ENCODE measurements at regions of chr5 and their contacts with region 1.

Region 1: DNA sequence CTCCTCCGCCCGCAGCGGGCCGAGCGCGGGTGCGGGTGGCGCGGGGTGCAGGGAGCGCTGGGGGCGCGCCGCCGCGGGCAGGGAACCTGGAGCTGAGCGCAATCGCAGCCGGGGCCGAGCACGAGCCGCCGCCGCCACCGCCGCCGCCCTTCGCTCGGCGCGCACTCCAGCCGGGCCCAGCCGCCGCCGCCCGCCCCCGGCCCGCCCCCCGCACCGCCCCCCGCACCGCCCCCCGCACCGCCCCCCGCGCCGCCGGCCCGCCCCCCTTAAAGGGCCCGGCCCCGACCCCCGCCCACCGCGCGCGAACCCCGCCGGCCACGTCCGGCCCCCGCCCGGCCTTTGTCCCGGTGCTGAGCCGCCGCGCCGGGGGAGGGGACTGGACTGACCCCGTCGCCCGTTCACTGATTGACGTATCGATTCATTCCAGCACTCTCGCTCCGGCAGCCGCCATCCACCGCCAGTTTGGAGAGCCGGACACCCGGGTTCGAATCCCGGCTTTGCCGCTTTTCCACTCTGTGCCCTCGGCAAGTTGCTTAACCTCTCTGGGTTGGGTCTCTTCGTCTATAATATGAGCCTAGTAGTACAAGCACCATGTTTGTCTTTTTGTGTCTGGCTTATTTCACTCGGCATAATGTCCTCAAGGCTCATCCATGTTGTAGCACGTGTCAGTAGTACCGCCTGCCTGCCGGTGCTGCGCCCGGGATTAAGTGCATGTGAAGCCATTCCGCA is at the start of gene SH3PXD2B:
- H3K4me3 Mint-ChIP-seq: peak within 1 kb of the TSS; percentile 80
- H3K27ac Mint-ChIP-seq: peak within 1 kb of the TSS; percentile 70
- H3K4me1 Mint-ChIP-seq: peaks cover 64% of the 10 kb centered on the region
- H3K27me3 Mint-ChIP-seq: peaks cover 71% of the 10 kb centered on the region

Region 2: GRCh38 chr5:172188033-172188892 is 266.3 kb before region 1 on chr5 and contains the start of gene STK10:
- intact Hi-C with region 1: no loop called
- H3K4me3 Mint-ChIP-seq: peak within 1 kb of the TSS; percentile 100
- H3K27ac Mint-ChIP-seq: peak within 1 kb of the TSS; percentile 97
- H3K4me1 Mint-ChIP-seq: peaks cover 36% of the 10 kb centered on the region
- H3K27me3 Mint-ChIP-seq: peaks cover 5% of the 10 kb centered on the region

Region 3: DNA sequence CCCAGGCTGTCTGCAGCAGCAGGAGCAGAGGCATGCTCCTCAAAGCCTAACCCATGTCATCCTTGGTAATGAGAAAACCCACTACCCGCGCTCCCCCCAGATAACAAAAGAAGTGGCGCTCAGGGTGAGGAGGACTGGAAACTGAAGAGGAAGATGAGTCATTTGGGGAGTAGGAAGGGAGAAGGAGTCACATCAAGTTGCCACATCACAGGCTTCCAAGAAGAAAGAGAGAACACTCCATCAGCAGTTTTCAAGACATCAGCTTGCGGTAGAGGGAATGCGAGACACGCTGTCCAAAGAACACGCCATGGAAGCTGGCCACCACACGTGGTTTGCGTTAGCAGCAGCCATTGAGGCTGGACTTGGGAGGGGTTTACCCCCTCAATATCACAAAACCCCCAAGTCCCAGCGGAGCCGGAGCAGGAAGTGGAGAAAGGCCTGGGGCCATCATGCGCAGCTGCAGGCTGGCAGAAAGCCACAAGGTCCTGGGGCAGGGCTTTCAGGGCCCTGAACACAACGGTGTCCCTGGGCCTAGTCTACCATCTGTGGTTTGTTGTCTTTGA is 41.7 kb before region 1 on chr5:
- intact Hi-C with region 1: loop called (anchors 5 kb)
- H3K4me3 Mint-ChIP-seq: peak overlapping the region; percentile 44
- H3K27ac Mint-ChIP-seq: peak overlapping the region; percentile 92
- H3K4me1 Mint-ChIP-seq: peaks cover 71% of the 10 kb centered on the region
- H3K27me3 Mint-ChIP-seq: peaks cover 11% of the 10 kb centered on the region

Region 4: DNA sequence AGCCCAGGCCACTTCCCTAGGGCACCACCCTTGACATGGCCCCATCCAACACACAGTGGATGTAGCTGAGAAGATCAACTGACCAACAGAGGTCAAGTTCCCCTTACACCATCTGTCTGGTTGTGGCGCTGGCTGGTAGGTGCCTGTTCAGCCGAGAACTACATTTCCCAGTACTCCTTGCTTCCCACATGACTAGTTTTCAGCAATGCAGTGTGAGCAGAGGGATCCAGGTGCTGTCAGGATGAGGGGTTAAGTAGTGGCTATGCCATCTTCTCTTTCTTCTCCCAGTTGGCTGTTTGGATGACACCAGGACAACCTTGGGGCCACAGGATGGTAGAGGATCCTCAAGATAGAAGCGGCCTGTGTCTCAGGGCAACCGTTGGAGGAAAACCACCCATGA is 48.4 kb after region 1 on chr5:
- intact Hi-C with region 1: no loop called
- H3K4me3 Mint-ChIP-seq: no peak overlapping the region
- H3K27ac Mint-ChIP-seq: peak overlapping the region; percentile 25
- H3K4me1 Mint-ChIP-seq: peaks cover 23% of the 10 kb centered on the region
- H3K27me3 Mint-ChIP-seq: peaks cover 29% of the 10 kb centered on the region

Region 5: DNA sequence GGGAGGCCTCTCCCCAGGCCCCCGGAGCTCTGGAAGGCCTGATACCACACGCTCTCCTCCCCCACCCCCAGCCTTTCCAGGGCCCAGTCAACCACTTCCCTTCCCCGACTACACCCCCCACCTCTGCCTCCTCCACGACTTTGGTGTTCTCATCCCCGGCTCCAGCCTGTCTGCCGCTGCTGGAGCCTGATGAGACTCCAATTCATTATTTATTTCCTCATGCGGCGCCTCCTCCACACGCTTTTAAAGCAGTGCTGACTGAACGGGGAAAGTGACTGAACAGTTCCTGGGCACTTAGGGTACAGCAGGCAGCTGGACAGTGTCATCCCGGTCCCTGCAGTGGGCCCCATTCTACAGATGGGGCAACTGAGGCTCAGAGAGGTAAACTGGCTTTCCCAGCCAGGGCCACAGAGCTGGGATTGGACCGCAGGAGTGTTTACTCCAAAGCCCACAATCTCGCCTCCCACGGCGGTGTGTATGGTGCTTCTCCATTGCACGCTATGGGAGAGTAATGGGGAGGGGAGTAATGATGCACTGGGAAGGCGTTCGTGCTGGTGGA is 488.8 kb after region 1 on chr5:
- intact Hi-C with region 1: loop called (anchors 10 kb)
- H3K4me3 Mint-ChIP-seq: no peak overlapping the region
- H3K27ac Mint-ChIP-seq: no peak overlapping the region
- H3K4me1 Mint-ChIP-seq: peaks cover 11% of the 10 kb centered on the region
- H3K27me3 Mint-ChIP-seq: no peaks in the 10 kb centered on the region

Measured in dendritic cell treated with granulocyte-macrophage colony-stimulating factor and Interleukin-4, amounts not matched to agents 40 ng/mL and 50 ng/mL, for 4 days (primary cell).